ENCODE measurements at regions of chr13 and their contacts with region 1.

Region 1: GRCh38 chr13:75704579-75705320 is 68.6 kb downstream of the LMO7 start:
- DNase-seq: peak; percentile 88 to 95
- H3K4me3 ChIP-seq: peak overlapping the region; percentile 49
- H3K27ac ChIP-seq: peak overlapping the region; percentile 100
- H3K4me1 ChIP-seq: peaks cover 57% of the 10 kb centered on the region
- H3K27me3 ChIP-seq: no peaks in the 10 kb centered on the region
- CTCF ChIP-seq: no peak; the same call in 1 of the 2 replicates

Region 2: GRCh38 chr13:75425216-75426009 is 279.3 kb before region 1 on chr13:
- CTCF ChIA-PET with region 1: no interaction called
- POLR2A ChIA-PET with region 1: no interaction called
- intact Hi-C with region 1: no loop called
- DNase-seq: no peak
- H3K4me3 ChIP-seq: no peak overlapping the region
- H3K27ac ChIP-seq: no peak overlapping the region
- H3K4me1 ChIP-seq: no peaks in the 10 kb centered on the region
- H3K27me3 ChIP-seq: no peaks in the 10 kb centered on the region
- CTCF ChIP-seq: no peak

Region 3: GRCh38 chr13:75715601-75716523 is 11.1 kb after region 1 on chr13:
- CTCF ChIA-PET with region 1: no interaction called
- POLR2A ChIA-PET with region 1: interaction called, 4 read pairs
- intact Hi-C with region 1: loop called (anchors 1 kb)
- DNase-seq: peak in 1 of 2 experiments; percentile 52
- H3K4me3 ChIP-seq: no peak overlapping the region
- H3K27ac ChIP-seq: peak overlapping the region; percentile 95
- H3K4me1 ChIP-seq: peaks cover 21% of the 10 kb centered on the region
- H3K27me3 ChIP-seq: no peaks in the 10 kb centered on the region
- CTCF ChIP-seq: no peak

Region 4: GRCh38 chr13:75724752-75725504 is 20.2 kb after region 1 on chr13:
- CTCF ChIA-PET with region 1: no interaction called
- POLR2A ChIA-PET with region 1: no interaction called
- intact Hi-C with region 1: loop called (anchors 1 kb)
- DNase-seq: peak in 1 of 2 experiments; percentile 82
- H3K4me3 ChIP-seq: peak overlapping the region; percentile 25; the same call in 1 of the 2 replicates
- H3K27ac ChIP-seq: peak overlapping the region; percentile 94
- H3K4me1 ChIP-seq: peaks cover 37% of the 10 kb centered on the region
- H3K27me3 ChIP-seq: no peaks in the 10 kb centered on the region
- CTCF ChIP-seq: no peak

Region 5: GRCh38 chr13:75760131-75761021 is 55.6 kb after region 1 on chr13:
- CTCF ChIA-PET with region 1: interaction called, 5 read pairs
- POLR2A ChIA-PET with region 1: interaction called, 20 read pairs
- intact Hi-C with region 1: loop called (anchors 1 kb)
- DNase-seq: peak; percentile 63 to 94
- H3K4me3 ChIP-seq: peak overlapping the region; percentile 59
- H3K27ac ChIP-seq: peak overlapping the region; percentile 97
- H3K4me1 ChIP-seq: peaks cover 30% of the 10 kb centered on the region
- H3K27me3 ChIP-seq: no peaks in the 10 kb centered on the region
- CTCF ChIP-seq: peak; percentile 44

Region 6: DNA sequence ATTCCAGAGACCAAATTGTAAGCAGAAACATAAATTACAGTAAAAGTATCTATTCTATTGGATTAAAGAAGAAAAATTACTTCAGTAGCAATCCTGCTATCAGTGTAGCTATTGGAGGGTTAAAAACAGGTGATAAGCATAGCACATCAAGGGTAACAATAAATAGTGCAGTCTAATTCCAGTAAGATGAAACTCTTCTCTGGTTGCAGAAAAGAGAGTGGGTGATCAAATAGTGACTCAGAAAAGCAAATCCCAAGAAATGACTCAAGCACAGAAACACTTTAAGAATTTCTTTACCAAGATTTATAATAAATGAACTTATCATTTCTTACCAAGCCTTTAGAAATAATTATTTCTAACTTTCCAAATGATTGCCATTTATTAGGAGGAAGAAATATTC is 67.1 kb after region 1 on chr13:
- CTCF ChIA-PET with region 1: no interaction called
- POLR2A ChIA-PET with region 1: no interaction called
- intact Hi-C with region 1: loop called (anchors 2 kb)
- DNase-seq: peak in 1 of 2 experiments; percentile 80
- H3K4me3 ChIP-seq: 0 out of 2 replicates have a peak overlapping the region, but pooled peaks have one; percentile 26
- H3K27ac ChIP-seq: peak overlapping the region; percentile 89
- H3K4me1 ChIP-seq: peaks cover 23% of the 10 kb centered on the region
- H3K27me3 ChIP-seq: no peaks in the 10 kb centered on the region
- CTCF ChIP-seq: no peak

Region 7: GRCh38 chr13:75788481-75788981 is 83.8 kb after region 1 on chr13:
- CTCF ChIA-PET with region 1: no interaction called
- POLR2A ChIA-PET with region 1: interaction called, 4 read pairs
- intact Hi-C with region 1: loop called (anchors 1 kb)
- DNase-seq: peak; percentile 52 to 82
- H3K4me3 ChIP-seq: no peak overlapping the region
- H3K27ac ChIP-seq: peak overlapping the region; percentile 10; the same call in 1 of the 2 replicates
- H3K4me1 ChIP-seq: 0 out of 2 replicates have a peak, but pooled peaks cover 4% of the 10 kb centered on the region
- H3K27me3 ChIP-seq: no peaks in the 10 kb centered on the region
- CTCF ChIP-seq: no peak

Region 8: GRCh38 chr13:77521595-77522367 is 1817.0 kb after region 1 on chr13:
- CTCF ChIA-PET with region 1: no interaction called
- POLR2A ChIA-PET with region 1: no interaction called
- intact Hi-C with region 1: loop called (anchors 2 kb)
- DNase-seq: peak; percentile 86 to 98
- H3K4me3 ChIP-seq: peak overlapping the region; percentile 35; the same call in 1 of the 2 replicates
- H3K27ac ChIP-seq: peak overlapping the region; percentile 97
- H3K4me1 ChIP-seq: peaks cover 59% of the 10 kb centered on the region
- H3K27me3 ChIP-seq: no peaks in the 10 kb centered on the region
- CTCF ChIP-seq: peak; percentile 22; the same call in 1 of the 2 replicates

Measured in PC-9 (cell line).